Activated naive CD4-positive, alpha-beta T cell treated with anti-CD3 and anti-CD28 coated beads for 36 hours (primary cell): ENCODE measurements at regions of chr10 and their contacts with region 1.

Region 1: DNA sequence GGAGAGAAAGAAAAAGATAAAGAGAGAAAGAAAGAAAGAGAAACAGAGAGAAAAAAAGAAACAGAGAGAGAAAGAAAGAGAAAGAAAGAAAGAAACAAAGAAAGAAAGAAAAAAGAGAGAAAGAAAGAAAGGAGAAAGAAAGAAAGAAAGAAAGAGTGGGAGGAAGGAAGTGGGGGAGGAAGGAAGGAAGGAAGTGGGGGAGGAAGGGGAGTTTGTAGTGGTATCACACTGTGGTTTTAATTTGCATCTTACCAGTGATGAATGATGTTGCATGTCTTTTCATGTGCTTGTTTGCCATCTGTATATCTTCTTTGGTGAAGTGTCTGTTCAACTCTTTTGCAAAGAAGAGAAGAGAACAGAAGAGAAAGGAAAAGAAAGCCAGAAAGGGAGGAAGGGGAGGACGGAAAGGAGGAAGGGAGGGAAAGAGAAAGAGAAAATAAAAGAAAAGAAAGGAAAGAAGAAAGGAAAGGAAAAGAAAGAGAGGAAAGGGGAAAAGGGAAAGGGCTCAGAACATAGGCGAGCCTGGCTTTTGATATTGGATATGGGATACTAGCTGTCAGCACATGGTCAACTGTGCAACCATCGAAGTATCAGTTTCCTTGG is 79.2 kb upstream of the FRMD4A start:
- DNase-seq: no peak
- H3K4me3 Mint-ChIP-seq: no peak overlapping the region
- H3K27ac Mint-ChIP-seq: peak overlapping the region; percentile 80
- H3K4me1 Mint-ChIP-seq: peaks cover 25% of the 10 kb centered on the region
- H3K27me3 Mint-ChIP-seq: peaks cover 30% of the 10 kb centered on the region

Region 2: DNA sequence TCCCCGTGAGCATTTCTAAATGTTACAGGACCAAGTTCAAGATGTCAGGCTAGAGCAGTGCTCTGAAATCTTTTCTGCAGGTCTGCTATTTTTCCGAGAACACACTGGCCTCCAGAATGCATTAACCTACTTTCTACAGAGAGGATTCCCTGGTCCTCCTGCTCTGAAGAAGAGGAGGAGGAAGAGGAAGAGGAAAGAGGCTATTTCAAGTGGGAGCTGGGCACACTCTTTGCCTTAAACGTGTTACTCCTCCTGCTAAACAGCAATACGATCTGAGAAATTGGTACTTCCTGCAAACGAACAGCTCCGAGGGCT is 236.6 kb before region 1 on chr10:
- CTCF ChIA-PET with region 1: no interaction called
- intact Hi-C with region 1: no loop called
- DNase-seq: no peak
- H3K4me3 Mint-ChIP-seq: peak overlapping the region; percentile 66
- H3K27ac Mint-ChIP-seq: no peak overlapping the region
- H3K4me1 Mint-ChIP-seq: peaks cover 15% of the 10 kb centered on the region
- H3K27me3 Mint-ChIP-seq: peaks cover 61% of the 10 kb centered on the region

Region 3: DNA sequence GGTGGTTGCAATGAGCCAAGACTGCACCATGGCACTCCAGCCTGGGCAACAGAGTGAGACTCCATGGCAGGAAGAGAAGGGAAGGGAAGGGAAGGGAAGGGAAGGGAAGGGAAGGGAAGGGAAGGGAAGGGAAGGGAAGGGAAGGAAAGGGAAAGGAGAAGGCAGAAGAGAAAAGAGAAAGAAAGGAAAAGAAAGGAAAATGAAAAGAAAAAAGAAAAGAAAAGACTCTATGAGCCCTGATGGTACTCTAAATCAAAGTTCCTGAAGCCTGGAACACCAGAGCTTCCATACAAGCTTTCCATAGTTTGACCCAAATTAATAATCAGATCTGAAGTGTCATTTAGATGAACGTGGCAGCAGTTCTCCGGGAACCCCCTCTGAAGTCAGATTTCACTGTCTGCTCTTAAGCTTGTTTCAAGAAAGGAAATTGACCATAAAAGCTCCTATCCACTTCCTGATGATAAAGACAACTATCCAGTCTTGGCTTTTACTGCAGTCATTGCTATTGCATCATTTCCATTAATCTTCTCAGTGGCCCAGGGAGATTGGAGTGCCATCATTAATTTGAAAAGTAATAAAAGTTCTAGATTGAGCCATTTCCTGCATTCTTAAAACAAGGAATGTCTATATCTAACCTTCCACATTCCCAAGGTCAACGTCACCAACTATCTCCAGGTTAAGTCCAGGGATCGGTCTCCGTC is 35.1 kb before region 1 on chr10:
- CTCF ChIA-PET with region 1: no interaction called
- intact Hi-C with region 1: loop called (anchors 1 kb)
- DNase-seq: peak; percentile 48
- H3K4me3 Mint-ChIP-seq: no peak overlapping the region
- H3K27ac Mint-ChIP-seq: no peak overlapping the region
- H3K4me1 Mint-ChIP-seq: peaks cover 19% of the 10 kb centered on the region
- H3K27me3 Mint-ChIP-seq: peaks cover 4% of the 10 kb centered on the region